ENCODE measurements at regions of chr2 and their contacts with region 1.

Region 1: GRCh38 chr2:128090945-128091725 is at the start of gene UGGT1:
- DNase-seq: peak; percentile 94 to 95
- H3K4me3 ChIP-seq: peak within 1 kb of the TSS; percentile 85
- H3K27ac ChIP-seq: peak within 1 kb of the TSS; percentile 73
- H3K4me1 ChIP-seq: peaks cover 18% of the 10 kb centered on the region; the same call in 1 of the 2 replicates
- H3K27me3 ChIP-seq: no peaks in the 10 kb centered on the region
- CTCF ChIP-seq: 0 out of 2 replicates have a peak, but pooled peaks have one; percentile 5
- total RNA-seq, gene UGGT1: 47.7 and 56.9 TPM in 2 replicates

Region 2: DNA sequence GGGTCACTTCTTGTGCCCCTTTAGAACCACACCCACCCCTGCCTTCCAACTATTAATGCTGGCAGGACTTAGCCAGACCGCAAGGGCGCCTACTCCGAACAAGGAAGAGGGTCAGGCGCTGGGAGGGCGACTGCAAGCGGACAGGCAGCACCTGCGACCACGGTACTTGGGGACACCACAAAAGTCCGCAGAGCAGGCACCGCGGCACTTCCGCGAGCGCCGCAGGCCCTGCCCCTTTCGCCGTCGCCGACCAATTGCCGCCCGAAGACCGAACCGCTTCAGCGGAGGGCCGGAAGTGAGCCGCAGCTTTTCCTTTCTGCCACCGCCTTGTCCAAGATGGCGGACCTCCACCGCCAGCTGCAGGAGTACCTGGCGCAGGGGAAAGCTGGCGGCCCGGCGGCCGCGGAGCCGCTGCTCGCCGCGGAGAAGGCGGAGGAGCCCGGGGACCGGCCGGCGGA is 389.9 kb before region 1 on chr2 and contains the start of gene SFT2D3:
- CTCF ChIA-PET with region 1: no interaction called
- POLR2A ChIA-PET with region 1: no interaction called
- intact Hi-C with region 1: loop called (anchors 2 kb)
- DNase-seq: peak; percentile 89 to 93
- H3K4me3 ChIP-seq: peak within 1 kb of the TSS; percentile 66
- H3K27ac ChIP-seq: peak within 1 kb of the TSS; percentile 94
- H3K4me1 ChIP-seq: peaks cover 32% of the 10 kb centered on the region
- H3K27me3 ChIP-seq: no peaks in the 10 kb centered on the region
- CTCF ChIP-seq: no peak
- total RNA-seq, gene SFT2D3: 7.3 and 8.4 TPM in 2 replicates

Region 3: GRCh38 chr2:127951026-127951425 is 140.1 kb before region 1 on chr2:
- CTCF ChIA-PET with region 1: no interaction called
- POLR2A ChIA-PET with region 1: no interaction called
- intact Hi-C with region 1: no loop called
- DNase-seq: no peak
- H3K4me3 ChIP-seq: no peak overlapping the region
- H3K27ac ChIP-seq: no peak overlapping the region
- H3K4me1 ChIP-seq: no peaks in the 10 kb centered on the region
- H3K27me3 ChIP-seq: no peaks in the 10 kb centered on the region
- CTCF ChIP-seq: no peak

Region 4: DNA sequence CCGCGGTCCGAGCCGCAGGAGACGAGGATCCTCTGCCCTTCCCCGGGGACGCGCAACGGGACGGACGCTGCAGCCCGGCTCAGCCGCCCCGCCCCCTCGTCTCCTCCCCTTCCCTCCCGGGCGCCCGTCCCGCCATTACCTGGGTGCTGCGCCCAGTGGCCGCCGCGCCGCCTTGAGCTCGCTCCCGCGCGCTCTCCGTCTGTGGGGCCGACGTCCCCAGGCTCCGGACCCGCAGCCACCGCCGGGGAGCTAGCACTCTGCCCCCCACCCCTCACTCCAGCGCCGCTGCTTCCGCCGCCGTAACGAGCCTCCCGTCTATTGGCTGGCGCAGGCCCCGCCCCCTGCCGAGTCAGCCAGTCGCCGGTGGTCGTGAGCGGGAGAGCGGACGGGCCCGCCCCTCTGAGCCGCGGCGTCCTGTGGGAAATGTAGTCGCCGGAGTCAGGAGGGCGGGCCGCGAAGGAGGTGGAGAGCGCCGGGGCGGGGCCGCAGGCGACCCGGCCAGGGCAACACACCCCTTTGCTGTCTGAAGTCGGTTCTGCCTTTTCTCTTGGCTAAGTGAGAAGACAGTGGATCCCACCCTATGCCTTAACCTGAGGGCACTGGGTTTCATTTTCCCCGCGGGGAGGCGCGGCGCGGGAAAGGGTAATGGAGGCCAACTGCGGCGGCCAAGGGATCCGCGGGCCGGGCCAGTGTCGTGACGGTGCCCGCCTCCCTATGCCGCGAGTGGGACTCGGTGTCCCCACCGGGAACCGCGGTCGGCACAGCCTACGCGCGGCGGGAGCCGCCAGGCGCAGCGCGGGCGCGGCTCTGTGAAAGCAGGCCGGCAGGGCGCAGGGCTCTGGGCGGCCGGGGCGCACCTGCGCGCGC is 63.1 kb before region 1 on chr2 and contains the start of gene SAP130:
- CTCF ChIA-PET with region 1: interaction called, 6 read pairs
- POLR2A ChIA-PET with region 1: no interaction called
- intact Hi-C with region 1: loop called (anchors 1 kb)
- DNase-seq: peak; percentile 91 to 99
- H3K4me3 ChIP-seq: peak within 1 kb of the TSS; percentile 98
- H3K27ac ChIP-seq: peak within 1 kb of the TSS; percentile 28; the same call in 1 of the 2 replicates
- H3K4me1 ChIP-seq: peaks cover 17% of the 10 kb centered on the region
- H3K27me3 ChIP-seq: no peaks in the 10 kb centered on the region
- CTCF ChIP-seq: no peak
- total RNA-seq, gene SAP130: 27.2 and 33.9 TPM in 2 replicates

Region 5: GRCh38 chr2:128057334-128057733 is 33.8 kb before region 1 on chr2:
- CTCF ChIA-PET with region 1: no interaction called
- POLR2A ChIA-PET with region 1: no interaction called
- intact Hi-C with region 1: no loop called
- DNase-seq: peak in 1 of 2 experiments; percentile 27
- H3K4me3 ChIP-seq: no peak overlapping the region
- H3K27ac ChIP-seq: no peak overlapping the region
- H3K4me1 ChIP-seq: no peaks in the 10 kb centered on the region
- H3K27me3 ChIP-seq: peaks cover 36% of the 10 kb centered on the region
- CTCF ChIP-seq: no peak

Region 6: GRCh38 chr2:128290356-128290755 is 199.2 kb after region 1 on chr2:
- CTCF ChIA-PET with region 1: no interaction called
- POLR2A ChIA-PET with region 1: interaction called, 20 read pairs
- intact Hi-C with region 1: no loop called
- DNase-seq: peak in 1 of 2 experiments; percentile 48
- H3K4me3 ChIP-seq: no peak overlapping the region
- H3K27ac ChIP-seq: no peak overlapping the region
- H3K4me1 ChIP-seq: no peaks in the 10 kb centered on the region
- H3K27me3 ChIP-seq: no peaks in the 10 kb centered on the region
- CTCF ChIP-seq: no peak

Measured in PC-9 (cell line).